Caco-2 (cell line): ENCODE measurements at regions of chr14 and their contacts with region 1.

Region 1: DNA sequence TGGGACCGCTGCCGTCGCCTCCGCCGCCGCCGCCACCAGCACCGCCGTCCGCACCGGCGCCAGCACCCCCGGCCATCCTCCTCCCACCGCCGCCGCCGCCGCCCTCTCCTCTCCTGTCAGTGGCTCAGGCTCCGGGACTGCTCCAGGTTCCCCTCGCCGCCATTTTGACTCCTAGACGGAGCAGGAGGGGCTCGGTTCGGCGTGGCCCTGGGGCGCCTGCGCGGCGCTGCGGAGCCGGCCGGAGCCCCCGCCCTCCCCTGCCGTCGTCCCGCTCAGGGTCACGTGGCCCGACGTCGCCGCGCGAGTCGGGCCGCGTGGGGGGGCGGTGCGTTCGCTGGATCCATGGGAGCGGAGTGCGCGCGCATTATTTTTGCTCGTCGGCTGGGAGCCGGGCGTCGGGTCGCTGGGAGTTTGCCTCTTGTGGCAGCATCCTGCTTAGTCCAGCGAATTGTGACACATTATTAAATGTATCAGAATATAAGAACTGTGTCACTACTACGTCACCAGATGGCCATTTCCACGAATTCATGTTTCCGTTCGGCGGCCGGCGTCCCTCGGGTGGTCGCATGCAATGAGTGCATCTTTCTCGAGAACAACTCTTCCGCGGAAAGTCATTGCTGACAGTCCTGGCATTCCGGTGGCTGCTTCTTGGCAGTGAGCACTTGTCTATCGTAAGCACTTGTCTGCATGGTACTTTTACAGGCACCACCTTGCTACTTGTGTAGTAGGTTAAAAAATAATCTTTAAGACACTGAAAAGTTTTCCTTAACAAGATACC is at the start of gene BTBD7:
- DNase-seq: peak; percentile 93 to 96
- H3K4me3 ChIP-seq: peak within 1 kb of the TSS; percentile 53
- H3K4me3 Mint-ChIP-seq: peak within 1 kb of the TSS; percentile 82
- H3K27ac Mint-ChIP-seq: peak within 1 kb of the TSS; percentile 95
- H3K4me1 ChIP-seq: peaks cover 21% of the 10 kb centered on the region
- H3K4me1 Mint-ChIP-seq: peaks cover 19% of the 10 kb centered on the region
- H3K27me3 ChIP-seq: no peaks in the 10 kb centered on the region
- H3K27me3 Mint-ChIP-seq: no peaks in the 10 kb centered on the region
- CTCF ChIP-seq: peak; percentile 12 to 22
- total RNA-seq, gene BTBD7: 28.8 and 32.2 TPM in 2 replicates

Region 2: GRCh38 chr14:93115069-93115820 is 217.8 kb before region 1 on chr14:
- CTCF ChIA-PET with region 1: no interaction called
- POLR2A ChIA-PET with region 1: no interaction called
- intact Hi-C with region 1: no loop called
- DNase-seq: peak; percentile 87 to 95
- H3K4me3 ChIP-seq: peak overlapping the region; percentile 48
- H3K4me3 Mint-ChIP-seq: peak overlapping the region; percentile 85
- H3K27ac Mint-ChIP-seq: no peak overlapping the region
- H3K4me1 ChIP-seq: peaks cover 14% of the 10 kb centered on the region
- H3K4me1 Mint-ChIP-seq: peaks cover 16% of the 10 kb centered on the region
- H3K27me3 ChIP-seq: no peaks in the 10 kb centered on the region
- H3K27me3 Mint-ChIP-seq: no peaks in the 10 kb centered on the region
- CTCF ChIP-seq: no peak

Region 3: GRCh38 chr14:93285044-93285443 is 48.0 kb before region 1 on chr14:
- CTCF ChIA-PET with region 1: interaction called, 4 read pairs
- POLR2A ChIA-PET with region 1: no interaction called
- intact Hi-C with region 1: loop called (anchors 5 kb)
- DNase-seq: no peak
- H3K4me3 ChIP-seq: no peak overlapping the region
- H3K4me3 Mint-ChIP-seq: no peak overlapping the region
- H3K27ac Mint-ChIP-seq: no peak overlapping the region
- H3K4me1 ChIP-seq: peaks cover 39% of the 10 kb centered on the region
- H3K4me1 Mint-ChIP-seq: peaks cover 25% of the 10 kb centered on the region
- H3K27me3 ChIP-seq: no peaks in the 10 kb centered on the region
- H3K27me3 Mint-ChIP-seq: no peaks in the 10 kb centered on the region
- CTCF ChIP-seq: no peak

Region 4: DNA sequence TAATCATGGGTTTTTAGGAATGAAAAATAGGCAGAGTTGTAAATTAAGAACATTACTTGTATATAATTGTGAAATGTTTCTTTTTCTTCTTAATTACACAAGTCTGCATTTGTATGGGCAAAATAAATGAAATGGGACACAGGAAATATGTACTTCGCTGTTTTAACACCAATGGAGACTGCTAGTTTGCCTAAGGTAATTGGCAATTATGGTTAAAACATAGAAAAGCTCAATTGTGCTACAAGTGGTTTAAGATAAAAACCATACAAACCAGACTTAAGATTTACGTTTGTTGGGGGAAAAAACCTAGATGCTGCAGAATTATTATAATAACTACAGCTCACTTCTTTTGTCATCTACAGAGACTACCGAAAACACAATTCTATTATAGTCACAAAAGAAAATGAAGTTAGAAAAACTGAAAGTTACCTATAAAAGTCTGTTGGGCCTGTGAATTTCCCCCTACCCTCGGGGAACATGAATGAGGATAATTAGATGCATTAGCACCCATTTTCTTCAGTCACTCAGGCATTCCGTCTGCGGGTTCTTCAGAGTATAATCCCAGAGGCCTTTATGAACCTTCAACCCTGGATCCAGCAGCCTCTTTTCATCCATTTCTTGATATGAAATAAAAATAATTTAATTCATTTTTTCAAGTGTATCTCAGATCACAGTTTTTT is 37.4 kb before region 1 on chr14:
- CTCF ChIA-PET with region 1: no interaction called
- POLR2A ChIA-PET with region 1: no interaction called
- intact Hi-C with region 1: no loop called
- DNase-seq: no peak
- H3K4me3 ChIP-seq: no peak overlapping the region
- H3K4me3 Mint-ChIP-seq: no peak overlapping the region
- H3K27ac Mint-ChIP-seq: no peak overlapping the region
- H3K4me1 ChIP-seq: no peaks in the 10 kb centered on the region; the same call in 1 of the 2 replicates
- H3K4me1 Mint-ChIP-seq: no peaks in the 10 kb centered on the region
- H3K27me3 ChIP-seq: no peaks in the 10 kb centered on the region
- H3K27me3 Mint-ChIP-seq: no peaks in the 10 kb centered on the region
- CTCF ChIP-seq: no peak